Endothelial cell of umbilical vein (primary cell): ENCODE measurements at regions of chr13 and their contacts with region 1.

Region 1: GRCh38 chr13:33153421-33154404 is 131.8 kb downstream of the STARD13 start:
- DNase-seq: peak; percentile 96
- H3K4me3 ChIP-seq: no peak overlapping the region
- H3K27ac ChIP-seq: peak overlapping the region; percentile 91
- H3K4me1 ChIP-seq: peaks cover 31% of the 10 kb centered on the region
- H3K27me3 ChIP-seq: no peaks in the 10 kb centered on the region
- CTCF ChIP-seq: peak; percentile 59 to 65
- POLR2A ChIP-seq: peak; percentile 46

Region 2: GRCh38 chr13:33069365-33069764 is 84.3 kb before region 1 on chr13:
- CTCF ChIA-PET with region 1: interaction called, 4 read pairs
- POLR2A ChIA-PET with region 1: no interaction called
- dilution Hi-C with region 1: no loop called
- intact Hi-C with region 1: loop called (anchors 2 kb)
- DNase-seq: peak; percentile 25
- H3K4me3 ChIP-seq: no peak overlapping the region
- H3K27ac ChIP-seq: no peak overlapping the region
- H3K4me1 ChIP-seq: no peaks in the 10 kb centered on the region
- H3K27me3 ChIP-seq: no peaks in the 10 kb centered on the region
- CTCF ChIP-seq: peak; percentile 2 to 10
- POLR2A ChIP-seq: no peak

Region 3: DNA sequence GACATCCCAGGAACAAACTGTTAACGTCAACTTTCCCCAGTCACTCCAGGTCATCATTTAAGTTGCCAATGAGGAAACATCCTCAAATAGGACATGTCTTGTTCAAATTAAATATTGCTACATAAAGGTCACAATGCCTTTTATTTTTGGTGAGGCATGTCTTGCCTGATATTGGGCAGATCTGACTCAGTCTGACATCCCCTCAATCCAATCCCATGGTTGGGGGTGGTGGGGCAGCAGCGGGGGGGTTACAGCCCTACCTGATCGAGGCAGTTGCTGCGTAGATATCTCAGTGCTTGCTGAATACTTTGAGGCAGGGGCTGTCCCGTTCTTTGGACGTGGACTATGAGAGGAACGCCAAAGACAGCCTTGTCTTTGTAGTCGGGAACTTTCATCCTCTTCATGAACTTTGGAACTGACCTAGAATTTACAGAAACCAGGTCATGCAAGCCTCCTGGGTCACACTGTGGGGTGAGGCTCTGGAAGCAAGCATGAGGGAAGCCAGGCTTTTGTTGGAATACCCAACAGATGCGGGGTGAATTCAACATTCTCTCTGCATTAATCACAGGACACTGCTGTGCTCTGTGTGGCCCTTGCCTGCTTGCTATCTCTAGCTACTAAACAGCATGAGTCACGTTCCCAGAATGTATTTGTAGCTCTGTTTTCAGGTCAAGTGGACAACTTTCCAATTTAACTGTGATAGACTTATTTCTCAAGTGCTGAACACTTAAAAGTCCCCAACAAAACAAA is 27.7 kb before region 1 on chr13:
- CTCF ChIA-PET with region 1: interaction called, 18 read pairs
- POLR2A ChIA-PET with region 1: no interaction called
- dilution Hi-C with region 1: no loop called
- intact Hi-C with region 1: loop called (anchors 1 kb)
- DNase-seq: peak; percentile 94
- H3K4me3 ChIP-seq: no peak overlapping the region
- H3K27ac ChIP-seq: peak overlapping the region; percentile 93
- H3K4me1 ChIP-seq: peaks cover 51% of the 10 kb centered on the region
- H3K27me3 ChIP-seq: no peaks in the 10 kb centered on the region
- CTCF ChIP-seq: no peak
- POLR2A ChIP-seq: peak; percentile 48

Region 4: DNA sequence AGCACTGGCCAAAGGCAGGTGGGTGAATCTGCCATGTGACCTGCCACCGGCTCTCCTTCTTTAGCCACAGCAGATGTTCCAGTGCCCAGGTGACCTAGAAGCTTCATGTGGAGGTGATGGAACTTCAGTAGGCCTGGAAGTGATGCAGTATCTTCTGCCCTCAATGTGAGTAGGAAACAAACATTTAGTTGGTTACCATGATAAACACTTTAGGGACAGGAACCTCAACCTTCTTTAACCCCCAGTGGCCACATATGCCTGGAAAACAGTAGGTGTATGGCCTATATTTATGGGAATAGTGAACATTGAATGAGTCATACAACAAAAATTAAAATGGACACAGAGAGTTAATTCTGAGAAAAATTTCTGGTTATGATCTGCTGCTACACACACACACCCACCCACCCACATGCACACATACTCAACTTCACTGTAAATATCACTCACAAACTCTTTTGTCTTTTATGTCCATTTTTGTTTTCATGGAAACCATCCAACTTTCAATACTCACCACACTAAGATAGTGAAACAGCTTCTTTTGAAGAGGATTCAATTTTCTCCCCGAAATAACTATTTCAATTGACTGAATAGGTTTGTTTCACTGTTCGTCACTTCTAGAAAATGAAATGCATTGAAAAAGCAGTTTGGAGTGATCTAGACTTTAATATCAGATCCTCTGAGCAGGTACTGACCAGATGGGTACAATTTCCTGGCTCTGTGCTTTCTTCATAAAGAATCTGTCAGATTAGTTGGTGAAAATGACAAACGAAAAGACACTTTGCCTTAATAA is 34.6 kb after region 1 on chr13:
- CTCF ChIA-PET with region 1: interaction called, 4 read pairs
- POLR2A ChIA-PET with region 1: no interaction called
- dilution Hi-C with region 1: no loop called
- intact Hi-C with region 1: loop called (anchors 1 kb)
- DNase-seq: peak; percentile 45
- H3K4me3 ChIP-seq: no peak overlapping the region
- H3K27ac ChIP-seq: peak overlapping the region; percentile 84
- H3K4me1 ChIP-seq: peaks cover 50% of the 10 kb centered on the region
- H3K27me3 ChIP-seq: no peaks in the 10 kb centered on the region
- CTCF ChIP-seq: no peak
- POLR2A ChIP-seq: no peak

Region 5: DNA sequence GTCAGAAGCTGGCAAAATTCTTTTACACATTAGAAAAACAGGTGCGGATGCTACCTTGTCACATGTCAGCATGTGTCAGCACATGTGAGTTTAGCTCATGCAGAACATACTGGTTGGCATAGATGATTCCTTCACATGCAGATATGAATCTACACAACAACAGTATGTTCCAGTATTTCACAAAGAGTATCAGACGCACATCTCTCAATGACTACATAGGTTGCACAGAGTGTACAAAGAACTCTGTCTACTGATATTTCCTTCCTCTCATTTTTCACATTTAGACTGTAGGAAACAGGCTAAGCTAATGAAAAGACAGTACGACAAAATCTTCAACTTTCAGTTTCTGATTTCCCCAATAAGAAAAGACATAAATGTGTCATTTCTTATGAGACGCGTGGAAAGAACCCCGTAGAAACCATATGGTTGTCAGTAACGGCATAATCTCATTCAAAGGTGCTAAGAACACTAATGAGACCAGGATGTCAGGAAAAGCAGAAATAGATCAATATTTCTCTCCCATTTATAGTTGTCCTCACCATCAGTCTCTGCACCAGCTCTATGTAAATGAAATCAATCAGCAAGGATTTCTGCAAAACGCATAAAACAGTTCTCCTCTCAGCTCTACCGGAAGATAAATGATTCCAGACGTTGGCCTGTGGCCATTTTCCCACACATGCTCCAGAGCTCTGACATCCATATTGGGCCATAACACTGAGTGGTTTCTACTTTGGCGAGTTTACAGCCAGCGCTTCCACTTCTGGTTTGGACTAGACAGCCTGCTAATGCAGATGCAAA is 50.6 kb after region 1 on chr13:
- CTCF ChIA-PET with region 1: no interaction called
- POLR2A ChIA-PET with region 1: no interaction called
- dilution Hi-C with region 1: no loop called
- intact Hi-C with region 1: loop called (anchors 2 kb)
- DNase-seq: peak; percentile 89
- H3K4me3 ChIP-seq: no peak overlapping the region
- H3K27ac ChIP-seq: peak overlapping the region; percentile 76
- H3K4me1 ChIP-seq: peaks cover 54% of the 10 kb centered on the region
- H3K27me3 ChIP-seq: no peaks in the 10 kb centered on the region
- CTCF ChIP-seq: no peak
- POLR2A ChIP-seq: no peak